Activated B cell treated with CpG ODN at 0.5 μM for 24 hours (primary cell): ENCODE measurements at regions of chr5 and their contacts with region 1.

Region 1: DNA sequence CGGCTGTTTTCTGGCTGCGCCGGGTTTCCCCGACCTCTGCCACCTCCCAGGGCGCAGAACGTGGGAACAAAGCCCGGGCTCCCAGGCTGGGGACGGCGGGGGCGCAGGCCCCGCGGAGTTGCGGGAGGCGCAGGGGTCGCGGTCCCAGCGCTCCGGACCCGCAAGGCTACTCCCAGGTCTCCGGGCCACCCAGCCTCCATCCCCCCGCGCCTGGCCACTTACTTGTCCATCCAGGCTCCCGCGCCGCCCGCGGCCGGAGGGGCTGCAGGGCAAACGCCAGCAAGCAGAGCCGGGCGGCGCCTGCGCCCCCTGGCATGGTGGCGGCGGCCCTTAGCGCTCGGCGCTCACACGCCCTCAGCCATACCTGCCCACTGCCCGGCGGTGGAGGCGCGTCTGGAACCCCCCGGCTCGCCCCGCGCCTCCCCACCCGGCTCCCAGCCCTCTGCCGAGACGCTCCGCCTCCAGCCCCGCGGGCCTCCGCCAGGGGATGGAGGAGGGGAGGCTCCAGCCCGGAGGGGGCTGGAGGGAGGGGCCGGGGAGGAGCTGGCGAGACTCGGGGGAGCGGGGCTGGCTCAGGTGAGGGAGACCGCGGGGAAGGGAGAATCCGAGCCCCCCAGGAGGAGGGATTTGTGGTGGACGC is at the start of gene ADAM19:
- DNase-seq: peak; percentile 70
- ATAC-seq: peak; percentile 56
- H3K4me3 Mint-ChIP-seq: peak within 1 kb of the TSS; percentile 99
- H3K27ac Mint-ChIP-seq: peak within 1 kb of the TSS; percentile 95
- H3K4me1 Mint-ChIP-seq: peaks cover 76% of the 10 kb centered on the region
- H3K27me3 Mint-ChIP-seq: no peaks in the 10 kb centered on the region
- CTCF ChIP-seq: no peak
- total RNA-seq, gene ADAM19: 115 and 136 TPM in 2 replicates

Region 2: DNA sequence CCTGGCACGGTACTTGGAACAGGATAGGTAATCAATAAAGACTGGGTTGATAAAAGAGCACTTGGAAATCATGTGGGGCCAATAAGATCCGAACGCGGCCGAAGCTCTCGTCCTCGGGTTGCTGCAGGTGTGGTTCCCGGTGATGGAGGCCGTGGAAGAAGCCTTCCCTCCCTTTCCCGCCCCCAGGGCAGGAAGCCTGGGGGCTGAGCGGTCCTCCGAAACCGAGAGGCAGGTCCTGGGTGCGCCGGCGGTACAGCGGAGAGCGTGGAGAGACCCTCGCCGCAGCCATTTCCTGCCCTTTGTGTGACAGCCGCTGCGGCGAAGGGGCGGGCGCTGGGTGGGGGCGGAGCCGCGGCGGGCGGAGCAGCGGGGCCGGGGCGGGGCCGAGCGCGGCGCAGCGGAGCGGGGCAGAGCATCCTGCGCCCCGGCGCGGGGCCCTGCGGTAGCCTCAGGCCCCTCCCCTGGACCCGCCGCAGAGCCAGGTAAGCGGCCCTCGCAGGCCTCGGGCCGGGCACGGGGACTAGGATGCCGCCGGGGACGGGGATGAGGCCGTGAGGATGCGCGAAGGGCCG is 309.7 kb before region 1 on chr5 and contains the start of gene CYFIP2:
- CTCF ChIA-PET with region 1: no interaction called
- POLR2A ChIA-PET with region 1: no interaction called
- intact Hi-C with region 1: loop called (anchors 10 kb)
- DNase-seq: peak; percentile 76
- ATAC-seq: peak; percentile 90
- H3K4me3 Mint-ChIP-seq: peak within 1 kb of the TSS; percentile 97
- H3K27ac Mint-ChIP-seq: peak within 1 kb of the TSS; percentile 99
- H3K4me1 Mint-ChIP-seq: peaks cover 69% of the 10 kb centered on the region
- H3K27me3 Mint-ChIP-seq: no peaks in the 10 kb centered on the region
- CTCF ChIP-seq: no peak
- total RNA-seq, gene CYFIP2: 385 and 471 TPM in 2 replicates

Region 3: DNA sequence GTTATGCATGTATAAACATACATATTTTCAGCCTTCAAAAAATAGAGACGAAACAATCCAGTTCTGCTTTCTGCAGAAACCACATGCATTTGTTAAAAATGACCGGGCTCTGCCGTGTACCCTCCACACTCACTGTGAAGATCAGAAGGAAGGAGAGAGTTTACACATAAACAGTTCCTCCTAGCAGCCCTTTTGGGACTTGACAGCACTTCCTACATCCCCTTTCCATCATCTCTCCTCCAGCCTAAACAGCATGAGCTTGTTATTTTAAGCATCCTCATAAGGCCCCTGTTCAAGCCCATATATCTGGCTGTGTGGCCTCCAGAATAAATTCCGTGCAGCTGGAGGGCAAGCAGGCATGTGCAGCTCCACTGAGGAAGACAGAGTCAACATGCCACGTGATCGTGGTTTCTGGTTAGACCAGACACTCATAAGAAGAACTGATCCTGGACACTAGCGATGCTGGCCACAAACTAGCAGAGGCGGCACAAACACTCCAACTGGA is 73.3 kb before region 1 on chr5:
- CTCF ChIA-PET with region 1: interaction called, 3 read pairs
- POLR2A ChIA-PET with region 1: interaction called, 9 read pairs
- intact Hi-C with region 1: loop called (anchors 1 kb)
- DNase-seq: no peak
- ATAC-seq: peak; percentile 73
- H3K4me3 Mint-ChIP-seq: peak overlapping the region; percentile 65
- H3K27ac Mint-ChIP-seq: peak overlapping the region; percentile 93
- H3K4me1 Mint-ChIP-seq: peaks cover 88% of the 10 kb centered on the region
- H3K27me3 Mint-ChIP-seq: no peaks in the 10 kb centered on the region
- CTCF ChIP-seq: no peak

Region 4: GRCh38 chr5:157540707-157541446 is 34.6 kb before region 1 on chr5:
- CTCF ChIA-PET with region 1: interaction called, 5 read pairs
- POLR2A ChIA-PET with region 1: interaction called, 23 read pairs
- intact Hi-C with region 1: loop called (anchors 1 kb)
- DNase-seq: peak; percentile 37
- ATAC-seq: peak; percentile 91
- H3K4me3 Mint-ChIP-seq: peak overlapping the region; percentile 60
- H3K27ac Mint-ChIP-seq: peak overlapping the region; percentile 92
- H3K4me1 Mint-ChIP-seq: peaks cover 86% of the 10 kb centered on the region
- H3K27me3 Mint-ChIP-seq: no peaks in the 10 kb centered on the region
- CTCF ChIP-seq: no peak

Region 5: GRCh38 chr5:157558041-157558595 is 17.4 kb before region 1 on chr5:
- CTCF ChIA-PET with region 1: interaction called, 3 read pairs
- POLR2A ChIA-PET with region 1: interaction called, 15 read pairs
- intact Hi-C with region 1: loop called (anchors 1 kb)
- DNase-seq: no peak
- ATAC-seq: no peak
- H3K4me3 Mint-ChIP-seq: no peak overlapping the region
- H3K27ac Mint-ChIP-seq: peak overlapping the region; percentile 83
- H3K4me1 Mint-ChIP-seq: peaks cover 90% of the 10 kb centered on the region
- H3K27me3 Mint-ChIP-seq: no peaks in the 10 kb centered on the region
- CTCF ChIP-seq: no peak

Region 6: DNA sequence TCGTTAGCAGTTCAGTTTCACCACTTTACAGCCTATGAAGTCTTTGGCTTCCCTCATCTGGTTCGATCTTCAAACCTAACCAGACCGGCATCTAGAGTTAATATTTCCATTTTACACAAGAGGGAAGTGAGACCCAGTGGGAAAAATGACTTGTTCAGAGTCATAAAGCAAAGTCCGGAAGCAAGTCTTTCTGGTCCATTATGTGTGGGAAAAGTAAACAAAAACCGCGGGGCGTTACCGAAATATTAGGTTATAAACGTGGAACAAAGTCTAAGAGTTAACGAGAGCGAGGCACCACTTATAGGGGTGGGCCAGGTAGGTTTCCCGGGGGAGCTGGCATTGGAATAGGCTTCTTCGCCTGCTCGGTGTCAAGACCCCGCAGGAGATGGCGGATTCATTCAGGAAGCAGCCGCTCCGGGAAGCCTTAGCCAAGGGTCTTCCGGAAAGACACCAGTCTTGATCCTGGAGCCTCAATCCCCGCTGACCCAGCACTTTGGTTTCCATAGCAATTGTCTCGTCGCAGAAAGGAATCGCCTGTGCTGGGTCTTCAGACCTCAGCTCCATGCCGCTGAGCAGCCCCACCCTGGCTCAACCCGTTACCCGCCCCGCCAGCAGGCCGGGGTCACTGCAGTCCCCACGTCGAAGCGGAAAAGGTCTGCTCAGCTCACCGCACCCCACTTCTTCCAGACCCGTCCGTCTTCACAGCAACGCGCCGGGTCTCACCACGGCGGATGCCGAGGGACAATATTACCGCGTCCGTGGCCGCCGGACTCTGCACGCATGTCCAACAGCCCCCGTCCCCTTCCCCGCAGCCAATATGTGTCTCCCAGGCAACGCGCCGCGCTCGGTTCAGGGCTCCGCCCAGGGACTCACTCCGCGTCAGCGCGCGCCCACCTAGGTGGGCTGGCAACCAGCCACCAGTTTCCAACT is 95.4 kb after region 1 on chr5 and contains the start of gene C5orf52:
- CTCF ChIA-PET with region 1: no interaction called
- POLR2A ChIA-PET with region 1: no interaction called
- intact Hi-C with region 1: loop called (anchors 1 kb)
- DNase-seq: no peak
- ATAC-seq: peak; percentile 55
- H3K4me3 Mint-ChIP-seq: peak within 1 kb of the TSS; percentile 95
- H3K27ac Mint-ChIP-seq: peak within 1 kb of the TSS; percentile 65
- H3K4me1 Mint-ChIP-seq: peaks cover 28% of the 10 kb centered on the region
- H3K27me3 Mint-ChIP-seq: no peaks in the 10 kb centered on the region
- CTCF ChIP-seq: no peak
- total RNA-seq, gene C5orf52: not detected in 2 replicates